PC-3 (cell line): ENCODE measurements at regions of chr4 and their contacts with region 1.

Region 1: DNA sequence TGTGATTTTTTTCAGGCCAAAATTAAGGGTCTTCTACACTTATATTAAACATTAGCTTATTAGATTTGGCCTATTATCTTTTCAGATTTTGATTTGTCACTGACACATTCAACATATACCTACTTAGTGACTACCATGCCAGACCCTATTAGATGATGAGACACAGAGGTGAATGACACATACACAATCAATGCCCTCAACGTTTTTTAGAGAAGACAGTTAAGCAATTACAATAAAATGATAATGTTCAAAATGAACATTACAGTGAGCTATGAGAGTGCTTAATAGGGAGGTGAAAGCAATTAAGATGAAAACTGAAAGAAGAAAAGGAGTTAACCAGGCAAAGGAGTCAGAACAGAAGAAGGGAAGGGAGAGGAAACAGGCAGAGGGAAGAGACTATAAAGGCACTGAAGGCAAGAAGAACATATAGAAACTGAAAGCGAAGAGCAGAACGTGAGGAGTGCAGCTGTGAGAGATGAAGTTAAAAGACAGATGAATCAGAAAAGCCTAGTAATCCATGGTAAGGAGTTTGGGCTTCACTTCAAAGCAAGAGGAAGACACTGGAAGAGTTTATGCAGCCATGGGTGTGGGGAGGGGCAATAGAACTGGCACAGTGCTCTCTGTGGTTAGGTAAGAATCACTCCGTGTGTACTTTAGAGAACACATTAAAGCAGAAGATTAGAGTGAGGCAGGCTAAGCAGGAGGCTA is 119.0 kb downstream of the REELD1 start:
- DNase-seq: peak; percentile 87
- ATAC-seq: peak; percentile 75
- H3K4me3 ChIP-seq: peak overlapping the region; percentile 28; the same call in 1 of the 2 replicates
- H3K27ac ChIP-seq: 0 out of 2 replicates have a peak overlapping the region, but pooled peaks have one; percentile 9
- H3K4me1 ChIP-seq: peaks cover 70% of the 10 kb centered on the region
- H3K27me3 ChIP-seq: no peaks in the 10 kb centered on the region
- CTCF ChIP-seq: no peak

Region 2: GRCh38 chr4:146175541-146176453 is 157.5 kb before region 1 on chr4 and contains the start of gene LSM6:
- CTCF ChIA-PET with region 1: no interaction called
- POLR2A ChIA-PET with region 1: no interaction called
- intact Hi-C with region 1: loop called (anchors 5 kb)
- DNase-seq: peak; percentile 87
- ATAC-seq: peak; percentile 83
- H3K4me3 ChIP-seq: peak within 1 kb of the TSS; percentile 84
- H3K27ac ChIP-seq: peak within 1 kb of the TSS; percentile 42
- H3K4me1 ChIP-seq: peaks cover 14% of the 10 kb centered on the region
- H3K27me3 ChIP-seq: no peaks in the 10 kb centered on the region
- CTCF ChIP-seq: no peak
- total RNA-seq, gene LSM6: 62.8 and 76.3 TPM in 2 replicates

Region 3: GRCh38 chr4:146243141-146243882 is 90.0 kb before region 1 on chr4:
- CTCF ChIA-PET with region 1: no interaction called
- POLR2A ChIA-PET with region 1: no interaction called
- intact Hi-C with region 1: loop called (anchors 1 kb)
- DNase-seq: peak; percentile 21
- ATAC-seq: no peak
- H3K4me3 ChIP-seq: no peak overlapping the region
- H3K27ac ChIP-seq: no peak overlapping the region
- H3K4me1 ChIP-seq: peaks cover 26% of the 10 kb centered on the region
- H3K27me3 ChIP-seq: no peaks in the 10 kb centered on the region
- CTCF ChIP-seq: peak; percentile 78

Region 4: GRCh38 chr4:146273204-146273901 is 60.0 kb before region 1 on chr4:
- CTCF ChIA-PET with region 1: no interaction called
- POLR2A ChIA-PET with region 1: no interaction called
- intact Hi-C with region 1: no loop called
- DNase-seq: no peak
- ATAC-seq: no peak
- H3K4me3 ChIP-seq: no peak overlapping the region
- H3K27ac ChIP-seq: no peak overlapping the region
- H3K4me1 ChIP-seq: no peaks in the 10 kb centered on the region
- H3K27me3 ChIP-seq: no peaks in the 10 kb centered on the region
- CTCF ChIP-seq: no peak

Region 5: DNA sequence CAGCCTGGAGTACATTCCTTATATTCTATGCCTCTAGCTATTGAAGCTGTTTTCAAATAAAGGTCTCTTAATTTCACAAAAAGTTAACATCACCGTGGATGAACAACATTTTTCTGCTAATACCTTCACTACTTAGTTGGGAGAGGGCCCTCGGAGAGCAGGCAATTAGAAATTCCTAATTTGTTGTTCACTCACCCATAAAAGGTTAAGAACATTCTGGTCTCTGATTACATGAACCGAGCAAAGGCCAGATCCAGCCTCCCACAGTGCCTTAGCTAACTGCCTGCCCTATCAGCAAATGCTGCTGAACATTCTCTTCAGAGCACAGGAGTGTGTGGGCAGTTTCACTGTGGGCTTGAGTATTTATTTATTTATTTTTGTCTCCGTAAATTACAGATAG is 648.3 kb after region 1 on chr4:
- CTCF ChIA-PET with region 1: no interaction called
- POLR2A ChIA-PET with region 1: no interaction called
- intact Hi-C with region 1: no loop called
- DNase-seq: no peak
- ATAC-seq: no peak
- H3K4me3 ChIP-seq: no peak overlapping the region
- H3K27ac ChIP-seq: no peak overlapping the region
- H3K4me1 ChIP-seq: no peaks in the 10 kb centered on the region
- H3K27me3 ChIP-seq: no peaks in the 10 kb centered on the region
- CTCF ChIP-seq: no peak